ENCODE measurements at regions of chr9 and their contacts with region 1.

Region 1: DNA sequence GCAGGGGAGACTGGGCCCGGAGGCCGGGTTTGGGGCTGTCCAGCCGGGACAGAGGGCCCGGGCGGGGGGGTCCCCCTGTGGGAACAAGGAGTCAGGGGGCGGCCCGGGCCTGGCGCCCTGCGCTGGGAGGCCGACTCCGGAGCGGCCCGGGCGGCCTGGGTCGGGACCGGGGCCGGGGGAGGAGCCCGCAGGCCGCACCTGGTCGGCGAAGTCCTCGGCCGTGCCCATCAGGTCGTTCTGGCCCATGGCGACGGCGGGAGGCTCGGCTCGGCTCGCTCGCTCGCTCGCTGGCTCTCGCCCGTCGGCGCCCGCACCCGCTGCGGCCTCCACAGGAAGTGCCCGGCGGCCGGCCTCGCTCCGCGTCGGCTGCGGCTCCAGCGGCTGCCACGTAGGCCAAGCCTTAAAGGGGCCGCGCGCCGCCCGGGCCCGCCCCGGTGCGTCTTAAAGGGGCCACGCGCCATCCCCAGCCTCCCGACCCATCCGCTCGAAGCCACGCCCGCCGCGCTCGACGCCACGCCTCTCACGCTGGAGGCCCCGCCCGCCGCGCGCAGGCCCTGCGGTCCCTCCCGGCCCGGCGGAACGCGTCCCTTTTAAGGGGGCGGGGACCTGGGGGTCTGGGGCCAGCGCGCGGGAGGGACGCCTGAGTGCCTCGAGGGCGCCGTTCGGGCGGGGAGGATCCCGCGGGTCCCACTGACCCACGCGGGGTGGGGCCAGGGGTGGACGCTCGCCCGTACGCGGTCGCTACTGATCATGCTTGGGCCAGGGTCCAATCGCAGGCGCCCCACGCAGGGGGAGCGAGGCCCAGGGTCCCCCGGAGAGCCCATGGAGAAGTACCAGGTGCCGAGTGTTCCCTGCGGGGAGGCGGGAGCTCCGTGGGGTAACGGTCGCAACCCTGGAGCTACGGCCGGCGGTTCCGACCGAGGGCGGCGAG is at the starts of genes STKLD1 and SURF4:
- DNase-seq: peak; percentile 96
- H3K4me3 Mint-ChIP-seq: peak within 1 kb of the TSS; percentile 87
- H3K27ac Mint-ChIP-seq: peak within 1 kb of the TSS; percentile 96
- H3K4me1 Mint-ChIP-seq: peaks cover 25% of the 10 kb centered on the region
- H3K27me3 Mint-ChIP-seq: peaks cover 2% of the 10 kb centered on the region
- total RNA-seq, gene STKLD1: 0.87 and 1.0 TPM in 2 replicates
- total RNA-seq, gene SURF4: 388 and 393 TPM in 2 replicates

Region 2: GRCh38 chr9:133149126-133150107 is 226.6 kb before region 1 on chr9:
- intact Hi-C with region 1: loop called (anchors 10 kb)
- DNase-seq: peak; percentile 80
- H3K4me3 Mint-ChIP-seq: peak overlapping the region; percentile 72
- H3K27ac Mint-ChIP-seq: peak overlapping the region; percentile 74
- H3K4me1 Mint-ChIP-seq: peaks cover 22% of the 10 kb centered on the region
- H3K27me3 Mint-ChIP-seq: no peaks in the 10 kb centered on the region

Region 3: DNA sequence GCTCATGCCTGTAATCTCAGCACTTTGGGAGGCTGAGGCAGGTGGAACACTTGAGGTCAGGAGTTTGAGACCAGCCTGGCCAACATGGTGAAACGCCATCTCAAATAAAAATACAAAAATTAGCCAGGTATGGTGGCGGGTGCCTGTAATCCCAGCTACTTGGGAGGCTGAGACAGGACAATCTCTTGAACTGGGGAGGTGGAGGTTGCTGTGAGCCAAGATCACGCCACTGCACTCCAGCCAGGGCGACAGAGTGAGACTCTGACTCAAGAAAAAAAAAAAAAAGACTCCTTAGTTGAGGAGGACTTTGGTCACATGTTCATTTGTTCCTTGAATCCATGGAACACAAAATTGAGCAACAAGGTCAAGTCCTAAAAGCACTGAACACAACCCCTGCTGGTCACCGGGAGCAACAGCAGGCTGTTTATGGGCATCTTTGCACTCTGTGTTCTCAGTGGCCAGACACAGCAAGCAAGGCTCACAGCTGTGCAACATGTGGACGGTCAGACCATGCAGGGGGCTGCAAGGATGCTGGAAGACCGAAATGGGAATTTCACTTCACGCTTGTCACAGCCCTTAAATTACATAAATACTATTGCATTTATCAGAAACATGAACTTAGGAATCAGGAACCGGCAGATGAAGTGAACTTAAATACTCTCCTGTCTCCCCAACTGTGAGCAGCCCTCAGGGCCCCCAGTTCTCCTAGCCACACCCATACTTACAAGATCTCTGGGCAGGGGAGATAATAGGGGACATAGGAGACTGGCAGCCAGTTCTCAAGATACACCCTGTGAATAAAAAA is 215.0 kb before region 1 on chr9:
- intact Hi-C with region 1: no loop called
- DNase-seq: no peak
- H3K4me3 Mint-ChIP-seq: peak overlapping the region; percentile 46
- H3K27ac Mint-ChIP-seq: no peak overlapping the region
- H3K4me1 Mint-ChIP-seq: peaks cover 3% of the 10 kb centered on the region
- H3K27me3 Mint-ChIP-seq: peaks cover 7% of the 10 kb centered on the region

Region 4: DNA sequence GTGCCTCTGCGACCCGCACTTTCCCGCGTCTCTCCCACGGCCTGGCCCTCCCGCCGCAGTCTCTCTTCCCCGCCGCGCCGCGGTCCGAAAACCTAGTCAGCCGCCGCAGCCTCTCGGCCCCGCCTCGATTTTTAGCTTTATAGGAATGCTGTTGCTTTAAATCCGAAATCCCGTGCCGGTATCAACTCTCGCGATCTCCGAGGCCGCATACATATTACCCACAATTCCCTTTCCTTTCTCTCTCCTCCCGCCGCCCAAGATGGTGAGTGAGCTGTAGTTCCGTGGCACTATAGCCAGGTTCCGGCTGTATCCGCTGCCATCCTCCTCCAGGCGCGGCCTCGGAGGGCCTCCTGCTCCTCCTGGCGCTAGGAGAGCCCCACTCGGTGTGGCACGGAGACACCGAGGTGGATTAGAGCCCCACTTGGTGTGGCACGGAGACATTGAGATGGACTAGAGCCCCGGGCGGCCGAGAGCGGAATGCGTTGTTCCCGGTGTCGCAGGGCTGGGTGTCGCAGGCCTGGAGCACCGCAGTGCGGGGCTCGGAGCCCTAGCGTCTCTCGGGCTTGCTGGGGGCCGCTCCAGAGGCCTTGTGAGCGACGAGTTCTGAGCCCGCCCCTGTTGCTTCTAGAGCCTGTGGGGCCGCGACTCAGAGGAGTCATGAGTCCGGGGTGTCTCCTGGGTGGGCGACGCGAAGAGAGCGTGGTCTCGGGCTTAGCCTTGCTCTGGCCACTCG is 27.8 kb before region 1 on chr9 and contains the starts of genes MED22 and RPL7A:
- intact Hi-C with region 1: loop called (anchors 1 kb)
- DNase-seq: peak; percentile 91
- H3K4me3 Mint-ChIP-seq: peak within 1 kb of the TSS; percentile 98
- H3K27ac Mint-ChIP-seq: peak within 1 kb of the TSS; percentile 96
- H3K4me1 Mint-ChIP-seq: peaks cover 33% of the 10 kb centered on the region
- H3K27me3 Mint-ChIP-seq: no peaks in the 10 kb centered on the region
- total RNA-seq, gene MED22: 35.2 and 36.4 TPM in 2 replicates
- total RNA-seq, gene RPL7A: 2,586 and 2,588 TPM in 2 replicates

Region 5: GRCh38 chr9:133417541-133418461 is 41.8 kb after region 1 on chr9 and contains the start of gene REXO4:
- intact Hi-C with region 1: loop called (anchors 1 kb)
- DNase-seq: peak; percentile 84
- H3K4me3 Mint-ChIP-seq: peak within 1 kb of the TSS; percentile 93
- H3K27ac Mint-ChIP-seq: peak within 1 kb of the TSS; percentile 88
- H3K4me1 Mint-ChIP-seq: peaks cover 44% of the 10 kb centered on the region
- H3K27me3 Mint-ChIP-seq: no peaks in the 10 kb centered on the region
- total RNA-seq, gene REXO4: 31.7 and 32.8 TPM in 2 replicates